GM13977 (cell line): ENCODE measurements at regions of chr17 and their contacts with region 1.

Region 1: DNA sequence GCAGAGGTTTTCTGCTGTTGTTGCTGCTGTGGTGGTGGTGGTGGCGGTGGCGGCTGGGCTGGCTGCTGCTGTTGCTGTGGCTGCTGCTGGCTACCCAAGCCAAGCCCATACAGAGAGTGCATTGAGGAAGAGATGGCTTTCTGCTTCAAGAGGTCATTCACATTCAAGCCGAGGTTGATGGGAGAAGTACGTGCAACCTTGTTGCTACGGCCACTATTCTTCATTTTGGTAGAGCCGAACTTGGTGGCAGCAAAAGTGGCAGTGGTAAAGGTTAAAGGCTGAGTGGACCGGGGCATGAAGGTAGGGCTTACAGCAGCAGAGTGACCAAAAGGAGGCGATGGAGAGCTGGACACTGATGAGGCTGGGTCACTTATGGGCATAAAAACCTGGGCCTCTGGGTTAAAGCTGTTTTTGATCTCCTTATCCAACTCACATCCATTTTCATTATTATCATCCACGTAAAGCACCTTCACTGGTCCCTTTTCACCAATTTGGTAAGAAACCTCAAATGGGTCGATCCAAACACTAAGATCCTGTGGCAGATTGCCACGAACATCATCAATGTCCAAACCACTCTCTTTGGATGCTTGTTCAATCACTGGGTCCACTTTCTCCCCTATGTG is 2.8 kb downstream of the TOB1 start:
- DNase-seq: no peak
- CTCF ChIP-seq: peak; percentile 59

Region 2: DNA sequence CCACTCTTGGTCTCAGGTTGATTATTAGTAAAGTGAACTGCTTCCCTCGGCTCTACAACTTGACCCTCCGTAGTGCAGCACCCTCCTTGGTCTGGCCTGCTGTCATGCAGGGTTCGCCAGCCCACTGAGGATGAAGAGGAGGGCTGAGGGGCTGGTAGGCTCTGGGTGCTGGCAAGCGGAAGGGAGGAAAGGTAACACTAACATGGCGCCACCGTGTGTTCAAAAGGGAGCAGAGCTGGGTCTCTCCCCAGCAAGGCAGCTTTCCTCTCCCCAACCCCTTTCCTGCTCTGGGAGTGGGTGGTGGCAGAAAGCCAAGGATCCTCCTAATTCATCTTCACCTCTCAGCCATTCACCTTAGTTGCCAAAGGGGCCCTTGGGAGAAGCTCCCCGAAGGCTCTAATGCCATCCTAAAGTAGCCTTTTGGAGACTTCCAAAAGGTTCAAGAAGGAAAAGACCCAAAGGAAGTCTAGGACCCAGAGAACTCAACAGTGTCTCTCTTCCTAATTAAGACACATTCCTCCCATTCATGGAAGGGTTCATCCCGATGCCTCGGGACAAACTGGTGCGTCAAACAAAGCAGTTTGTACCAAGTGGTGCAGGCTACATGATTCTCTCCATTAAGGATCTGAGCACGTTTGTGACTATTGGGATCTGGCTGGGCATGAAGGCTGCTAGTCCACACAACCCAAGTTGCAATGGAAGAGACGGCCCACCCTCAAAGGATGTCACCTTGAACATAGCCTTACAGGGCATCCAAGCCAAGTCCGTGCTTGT is 93.6 kb after region 1 on chr17:
- in situ Hi-C with region 1: loop called (anchors 5 kb)
- DNase-seq: peak; percentile 73
- CTCF ChIP-seq: peak; percentile 81